IMR-90 (cell line): ENCODE measurements at regions of chr1 and their contacts with region 1.

Region 1: GRCh38 chr1:203944651-203945404 is 83.4 kb downstream of the SNRPE start:
- DNase-seq: no peak
- ATAC-seq: no peak
- H3K4me3 ChIP-seq: no peak overlapping the region
- H3K27ac ChIP-seq: no peak overlapping the region
- H3K4me1 ChIP-seq: no peaks in the 10 kb centered on the region
- H3K27me3 ChIP-seq: peaks cover 9% of the 10 kb centered on the region; the same call in 1 of the 2 replicates
- CTCF ChIP-seq: no peak
- POLR2A ChIP-seq: no peak
- RAD21 ChIP-seq: no peak

Region 2: GRCh38 chr1:203969861-203970260 is 25.0 kb after region 1 on chr1:
- CTCF ChIA-PET with region 1: no interaction called
- POLR2A ChIA-PET with region 1: no interaction called
- dilution Hi-C with region 1: no loop called
- in situ Hi-C with region 1: no loop called
- intact Hi-C with region 1: loop called (anchors 5 kb)
- DNase-seq: no peak
- ATAC-seq: no peak
- H3K4me3 ChIP-seq: no peak overlapping the region
- H3K27ac ChIP-seq: no peak overlapping the region
- H3K4me1 ChIP-seq: no peaks in the 10 kb centered on the region
- H3K27me3 ChIP-seq: no peaks in the 10 kb centered on the region
- CTCF ChIP-seq: no peak
- POLR2A ChIP-seq: no peak
- RAD21 ChIP-seq: no peak

Region 3: GRCh38 chr1:204032632-204033235 is 87.9 kb after region 1 on chr1:
- CTCF ChIA-PET with region 1: interaction called, 3 read pairs
- POLR2A ChIA-PET with region 1: no interaction called
- dilution Hi-C with region 1: no loop called
- in situ Hi-C with region 1: no loop called
- intact Hi-C with region 1: loop called (anchors 5 kb)
- DNase-seq: no peak
- ATAC-seq: no peak; the same call in 1 of the 2 replicates
- H3K4me3 ChIP-seq: no peak overlapping the region
- H3K27ac ChIP-seq: no peak overlapping the region
- H3K4me1 ChIP-seq: no peaks in the 10 kb centered on the region
- H3K27me3 ChIP-seq: peaks cover 20% of the 10 kb centered on the region
- CTCF ChIP-seq: no peak
- POLR2A ChIP-seq: no peak
- RAD21 ChIP-seq: no peak